Endothelial cell of umbilical vein (primary cell): ENCODE measurements at regions of chr13 and their contacts with region 1.

Region 1: GRCh38 chr13:75326173-75327134 is 155.5 kb downstream of the TBC1D4 start:
- DNase-seq: peak; percentile 87
- H3K4me3 ChIP-seq: peak overlapping the region in 2 of 3 experiments; percentile 24 to 44
- H3K27ac ChIP-seq: peak overlapping the region; percentile 82
- H3K4me1 ChIP-seq: peaks cover 53% of the 10 kb centered on the region
- H3K27me3 ChIP-seq: no peaks in the 10 kb centered on the region
- CTCF ChIP-seq: no peak
- POLR2A ChIP-seq: no peak

Region 2: GRCh38 chr13:74623761-74624160 is 702.7 kb before region 1 on chr13:
- CTCF ChIA-PET with region 1: no interaction called
- POLR2A ChIA-PET with region 1: no interaction called
- dilution Hi-C with region 1: no loop called
- intact Hi-C with region 1: no loop called
- DNase-seq: no peak
- H3K4me3 ChIP-seq: no peak overlapping the region
- H3K27ac ChIP-seq: no peak overlapping the region
- H3K4me1 ChIP-seq: no peaks in the 10 kb centered on the region
- H3K27me3 ChIP-seq: no peaks in the 10 kb centered on the region
- CTCF ChIP-seq: no peak
- POLR2A ChIP-seq: no peak

Region 3: DNA sequence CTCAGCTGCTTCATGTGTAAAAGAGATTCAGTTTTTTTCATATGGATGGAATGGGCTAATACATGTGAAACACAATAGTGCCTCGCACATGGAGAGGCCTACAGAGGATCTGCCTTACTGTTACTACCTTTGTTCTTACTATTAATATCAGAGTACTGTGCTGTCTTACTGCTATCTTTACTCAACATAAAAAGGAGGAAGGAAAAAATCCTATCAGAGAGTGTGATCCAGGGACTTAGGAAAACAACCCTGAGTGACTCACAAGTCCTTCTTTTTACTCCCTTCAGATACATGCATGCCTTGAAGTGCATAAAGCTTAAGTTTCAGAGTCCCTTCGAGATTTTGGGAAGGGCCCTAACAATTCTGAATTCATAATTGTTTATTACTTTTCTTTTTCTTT is 18.7 kb after region 1 on chr13:
- CTCF ChIA-PET with region 1: interaction called, 6 read pairs
- POLR2A ChIA-PET with region 1: interaction called, 3 read pairs
- dilution Hi-C with region 1: no loop called
- intact Hi-C with region 1: loop called (anchors 1 kb)
- DNase-seq: peak; percentile 86
- H3K4me3 ChIP-seq: no peak overlapping the region
- H3K27ac ChIP-seq: peak overlapping the region; percentile 83
- H3K4me1 ChIP-seq: peaks cover 21% of the 10 kb centered on the region
- H3K27me3 ChIP-seq: no peaks in the 10 kb centered on the region
- CTCF ChIP-seq: no peak
- POLR2A ChIP-seq: no peak

Region 4: GRCh38 chr13:75357576-75358289 is 31.3 kb after region 1 on chr13:
- CTCF ChIA-PET with region 1: interaction called, 13 read pairs
- POLR2A ChIA-PET with region 1: no interaction called
- dilution Hi-C with region 1: no loop called
- intact Hi-C with region 1: loop called (anchors 1 kb)
- DNase-seq: peak; percentile 78
- H3K4me3 ChIP-seq: no peak overlapping the region
- H3K27ac ChIP-seq: no peak overlapping the region
- H3K4me1 ChIP-seq: peaks cover 2% of the 10 kb centered on the region
- H3K27me3 ChIP-seq: no peaks in the 10 kb centered on the region
- CTCF ChIP-seq: peak; percentile 72 to 78
- POLR2A ChIP-seq: no peak

Region 5: DNA sequence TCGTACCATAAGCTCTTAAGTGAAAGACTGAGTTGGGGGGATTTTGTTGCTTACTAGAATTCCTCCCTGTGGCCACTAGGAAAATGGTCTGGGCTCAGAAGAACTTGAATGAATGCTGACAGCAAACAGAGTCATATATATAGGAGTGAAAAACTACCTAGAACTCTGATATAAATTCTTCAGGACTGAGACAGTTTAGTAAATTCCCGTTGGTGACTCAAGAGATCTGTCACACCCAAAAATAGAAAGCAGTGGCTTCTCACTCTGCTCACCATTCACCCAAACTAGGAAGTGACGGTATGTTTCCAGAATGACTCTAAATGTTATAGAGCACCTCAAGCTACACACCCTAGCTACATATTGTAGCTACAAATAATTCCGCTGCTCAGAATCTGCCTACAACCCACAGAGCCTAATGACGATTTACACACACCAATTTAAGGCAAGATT is 39.3 kb after region 1 on chr13:
- CTCF ChIA-PET with region 1: interaction called, 10 read pairs
- POLR2A ChIA-PET with region 1: interaction called, 6 read pairs
- dilution Hi-C with region 1: no loop called
- intact Hi-C with region 1: loop called (anchors 1 kb)
- DNase-seq: peak; percentile 84
- H3K4me3 ChIP-seq: peak overlapping the region; percentile 23 to 96 (median 68)
- H3K27ac ChIP-seq: peak overlapping the region; percentile 98
- H3K4me1 ChIP-seq: peaks cover 49% of the 10 kb centered on the region
- H3K27me3 ChIP-seq: no peaks in the 10 kb centered on the region
- CTCF ChIP-seq: peak; percentile 17 to 19
- POLR2A ChIP-seq: no peak